HEK293 (cell line): ENCODE measurements at regions of chr12 and their contacts with region 1.

Region 1: GRCh38 chr12:122459211-122459610 is 36.7 kb upstream of the CLIP1 start:
- H3K4me3 ChIP-seq: no peak overlapping the region
- H3K27ac ChIP-seq: no peak overlapping the region
- H3K4me1 ChIP-seq: no peaks in the 10 kb centered on the region
- CTCF ChIP-seq: no peak

Region 2: GRCh38 chr12:122471324-122472226 is 12.4 kb after region 1 on chr12:
- CTCF ChIA-PET with region 1: interaction called, 10 read pairs
- POLR2A ChIA-PET with region 1: interaction called, 5 read pairs
- H3K4me3 ChIP-seq: no peak overlapping the region
- H3K27ac ChIP-seq: no peak overlapping the region; the same call in 1 of the 2 replicates
- H3K4me1 ChIP-seq: 0 out of 2 replicates have a peak, but pooled peaks cover 3% of the 10 kb centered on the region
- CTCF ChIP-seq: no peak